Endothelial cell of umbilical vein (primary cell): ENCODE measurements at regions of chr4 and their contacts with region 1.

Region 1: DNA sequence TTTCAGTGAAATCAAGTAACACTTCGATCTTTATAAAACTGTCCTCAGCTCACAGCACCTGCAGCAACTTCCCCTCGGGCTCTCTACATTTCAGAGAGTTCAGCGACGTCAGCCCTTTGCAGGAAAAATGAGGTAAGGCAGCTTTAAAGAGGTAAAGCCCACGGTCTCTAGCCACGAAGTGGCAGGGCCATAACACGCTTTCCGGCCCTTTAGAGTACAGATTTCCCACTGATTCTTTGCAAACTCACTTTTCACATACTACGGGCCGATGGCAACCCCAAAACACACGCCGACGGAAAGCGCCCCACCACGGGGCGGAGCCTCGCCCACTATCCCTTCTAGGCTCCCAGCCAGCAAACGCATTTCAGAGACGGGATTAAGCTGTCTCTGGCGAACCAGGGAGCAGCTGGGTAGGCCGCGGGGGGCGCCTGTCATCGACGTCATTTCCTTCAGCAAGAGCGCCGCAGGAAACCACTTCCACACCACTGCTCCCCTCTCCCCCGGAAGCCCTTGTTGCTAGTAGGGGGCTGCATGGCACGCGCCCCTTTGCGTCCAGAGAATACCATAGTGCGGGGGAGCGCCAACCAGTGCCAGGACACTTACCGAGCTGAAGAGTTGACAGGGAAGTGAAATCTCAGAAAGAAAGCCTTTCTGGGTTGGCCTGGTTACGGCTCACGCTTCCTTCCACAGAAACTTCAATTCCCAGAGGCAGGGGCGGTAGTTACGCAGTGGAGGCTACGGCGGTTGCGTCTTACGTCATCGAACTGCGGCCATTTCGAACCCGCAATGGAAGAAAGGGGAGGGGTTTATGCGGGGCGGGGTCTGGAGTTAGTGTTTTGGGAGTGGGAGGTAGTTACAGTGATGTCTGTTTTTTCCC is at the start of gene TRMT10A:
- DNase-seq: peak; percentile 98
- H3K4me3 ChIP-seq: peak within 1 kb of the TSS; percentile 38 to 85 (median 73)
- H3K27ac ChIP-seq: peak within 1 kb of the TSS; percentile 90
- H3K4me1 ChIP-seq: peaks cover 6% of the 10 kb centered on the region
- H3K27me3 ChIP-seq: peaks cover 3 to 11% of the 10 kb centered on the region in 2 experiments
- CTCF ChIP-seq: no peak
- POLR2A ChIP-seq: no peak
- total RNA-seq, gene TRMT10A: 6.5 and 8.4 TPM in 2 replicates

Region 2: DNA sequence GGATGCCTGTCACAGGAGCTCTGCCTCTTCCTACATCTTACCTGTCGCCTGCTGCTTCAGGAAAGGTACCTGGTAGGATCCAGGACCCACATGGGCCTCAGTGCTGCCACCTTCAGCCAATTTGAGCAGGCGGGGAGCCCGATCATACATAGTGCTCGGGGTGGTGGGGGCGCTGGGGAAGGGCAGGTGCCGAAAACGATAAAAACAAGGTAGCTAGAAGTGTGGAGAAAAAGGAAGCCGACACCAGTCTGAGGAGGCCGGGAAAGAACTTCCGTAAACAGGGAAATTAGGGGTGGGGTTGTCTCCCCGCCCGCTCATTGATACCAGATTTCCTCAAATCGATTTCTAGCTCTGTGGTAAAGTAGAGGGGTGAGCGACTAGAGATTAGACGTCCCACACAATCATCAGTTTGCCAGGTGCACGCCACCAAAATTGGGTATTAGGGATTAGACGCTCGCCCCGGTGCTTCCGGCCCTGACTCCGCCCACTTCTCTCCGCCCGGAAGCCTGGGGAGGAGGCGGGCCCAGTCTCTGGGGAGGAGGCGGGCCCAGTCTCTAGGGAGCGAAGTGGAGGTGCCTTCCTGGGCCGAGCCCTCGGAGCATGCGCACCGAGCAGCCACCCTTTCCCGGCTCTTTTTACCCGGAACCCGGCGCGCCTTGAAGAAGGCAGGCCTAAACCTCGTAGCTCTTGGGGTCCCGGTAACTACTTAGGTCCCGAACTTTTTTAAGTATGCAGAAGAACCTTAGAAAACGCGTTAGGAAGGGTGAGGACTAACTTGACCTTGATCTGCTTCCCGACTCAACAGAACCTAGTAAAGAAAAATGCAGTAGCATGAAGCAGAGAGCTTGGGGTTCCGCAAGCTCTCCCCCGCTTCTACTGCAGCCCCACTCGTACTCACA is 1420.3 kb before region 1 on chr4 and contains the start of gene STPG2:
- CTCF ChIA-PET with region 1: no interaction called
- POLR2A ChIA-PET with region 1: no interaction called
- dilution Hi-C with region 1: no loop called
- intact Hi-C with region 1: loop called (anchors 5 kb)
- DNase-seq: peak; percentile 87
- H3K4me3 ChIP-seq: peak within 1 kb of the TSS; percentile 62 to 88 (median 71)
- H3K27ac ChIP-seq: peak within 1 kb of the TSS; percentile 71
- H3K4me1 ChIP-seq: peaks cover 5% of the 10 kb centered on the region
- H3K27me3 ChIP-seq: no peaks in the 10 kb centered on the region
- CTCF ChIP-seq: peak; percentile 22 to 59
- POLR2A ChIP-seq: peak; percentile 59
- total RNA-seq, gene STPG2: not detected in 2 replicates

Region 3: GRCh38 chr4:98928505-98929340 is 634.8 kb before region 1 on chr4 and contains the start of gene EIF4E:
- CTCF ChIA-PET with region 1: no interaction called
- POLR2A ChIA-PET with region 1: no interaction called
- dilution Hi-C with region 1: no loop called
- intact Hi-C with region 1: loop called (anchors 5 kb)
- DNase-seq: peak; percentile 99
- H3K4me3 ChIP-seq: peak within 1 kb of the TSS; percentile 91 to 95 (median 91)
- H3K27ac ChIP-seq: peak within 1 kb of the TSS; percentile 93
- H3K4me1 ChIP-seq: peaks cover 32% of the 10 kb centered on the region
- H3K27me3 ChIP-seq: no peaks in the 10 kb centered on the region
- CTCF ChIP-seq: peak in 1 of 2 donors; percentile 26
- POLR2A ChIP-seq: peak; percentile 81
- total RNA-seq, gene EIF4E: 103 and 107 TPM in 2 replicates

Region 4: DNA sequence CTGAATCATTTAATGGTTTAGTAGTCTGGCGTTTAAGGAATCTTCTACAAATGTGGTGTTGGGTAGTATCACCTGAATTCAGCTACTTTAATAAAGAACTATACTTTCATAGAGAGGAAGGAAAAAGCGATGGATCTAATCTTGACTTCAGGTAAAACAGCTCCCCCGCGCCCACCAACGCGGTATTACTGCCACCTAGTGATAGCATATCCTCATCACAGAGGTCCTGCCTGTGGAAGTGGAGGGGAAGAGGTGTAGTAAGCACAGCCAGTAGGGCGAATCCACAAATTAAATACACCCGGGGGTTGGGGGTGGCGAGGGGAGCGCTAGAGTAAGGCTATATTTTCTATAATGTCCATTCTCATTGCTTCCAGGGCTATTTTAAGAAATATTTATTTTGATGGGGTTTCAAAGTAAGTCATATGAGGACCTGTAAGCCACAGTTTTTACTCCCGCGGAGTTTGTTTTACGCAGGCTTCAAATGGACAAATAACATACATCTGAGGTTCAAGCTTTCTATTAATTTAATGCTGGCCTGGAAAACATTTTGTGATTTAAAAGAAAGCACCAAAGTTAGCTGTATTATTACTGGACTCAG is 244.8 kb after region 1 on chr4:
- CTCF ChIA-PET with region 1: interaction called, 18 read pairs
- POLR2A ChIA-PET with region 1: no interaction called
- dilution Hi-C with region 1: no loop called
- intact Hi-C with region 1: loop called (anchors 1 kb)
- DNase-seq: peak; percentile 47
- H3K4me3 ChIP-seq: no peak overlapping the region
- H3K27ac ChIP-seq: no peak overlapping the region
- H3K4me1 ChIP-seq: no peaks in the 10 kb centered on the region
- H3K27me3 ChIP-seq: no peaks in the 10 kb centered on the region
- CTCF ChIP-seq: peak; percentile 40 to 46
- POLR2A ChIP-seq: no peak

Region 5: GRCh38 chr4:99894161-99894997 is 330.8 kb after region 1 on chr4 and contains the start of gene LAMTOR3:
- CTCF ChIA-PET with region 1: no interaction called
- POLR2A ChIA-PET with region 1: no interaction called
- dilution Hi-C with region 1: no loop called
- intact Hi-C with region 1: loop called (anchors 1 kb)
- DNase-seq: peak; percentile 83
- H3K4me3 ChIP-seq: peak within 1 kb of the TSS; percentile 97 to 98 (median 98)
- H3K27ac ChIP-seq: peak within 1 kb of the TSS; percentile 98
- H3K4me1 ChIP-seq: peaks cover 16% of the 10 kb centered on the region
- H3K27me3 ChIP-seq: no peaks in the 10 kb centered on the region
- CTCF ChIP-seq: no peak
- POLR2A ChIP-seq: peak; percentile 36
- total RNA-seq, gene LAMTOR3: 25.3 and 29.1 TPM in 2 replicates

Region 6: DNA sequence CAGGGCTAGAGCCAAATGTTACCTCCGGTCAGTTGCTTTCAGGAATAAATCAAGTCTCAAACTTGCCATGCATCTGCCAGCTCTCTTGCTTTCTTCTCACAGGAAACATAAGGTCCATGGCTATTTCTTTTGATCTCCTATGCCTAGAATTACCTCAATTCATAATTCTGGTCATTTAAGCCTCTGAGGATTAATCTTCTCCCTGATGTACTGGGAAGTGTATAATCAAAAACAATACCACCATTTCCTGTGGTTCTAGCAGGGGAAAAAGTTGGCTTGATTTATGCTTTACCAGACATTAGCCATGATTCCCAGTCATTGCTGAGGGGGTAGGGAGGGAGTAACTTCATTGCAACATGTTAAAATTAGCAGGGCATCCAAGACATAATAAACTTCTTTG is 1222.9 kb after region 1 on chr4:
- CTCF ChIA-PET with region 1: no interaction called
- POLR2A ChIA-PET with region 1: no interaction called
- dilution Hi-C with region 1: no loop called
- intact Hi-C with region 1: loop called (anchors 5 kb)
- DNase-seq: peak; percentile 62
- H3K4me3 ChIP-seq: no peak overlapping the region
- H3K27ac ChIP-seq: no peak overlapping the region
- H3K4me1 ChIP-seq: no peaks in the 10 kb centered on the region
- H3K27me3 ChIP-seq: no peaks in the 10 kb centered on the region
- CTCF ChIP-seq: no peak
- POLR2A ChIP-seq: no peak